B cell (primary cell): ENCODE measurements at regions of chr14 and their contacts with region 1.

Region 1: DNA sequence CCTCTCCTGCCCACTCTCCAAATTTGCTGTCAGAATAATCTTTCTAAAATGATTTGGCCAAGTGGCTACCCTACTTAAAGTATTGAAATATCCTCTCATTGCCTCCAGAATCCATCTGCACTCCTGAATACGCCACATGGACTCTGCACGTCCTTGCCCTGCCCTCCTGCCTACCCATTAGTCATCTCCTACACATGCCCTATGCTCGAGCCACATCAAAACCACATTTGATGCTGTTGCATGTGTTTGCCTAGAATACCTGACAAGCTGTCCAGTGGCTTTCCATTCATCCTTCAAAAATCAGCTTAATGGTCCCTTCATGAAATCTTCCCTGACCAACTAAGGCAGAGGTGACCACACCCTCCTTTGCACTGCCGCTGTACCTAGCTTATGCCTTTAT is 17.0 kb downstream of the VCPKMT start:
- DNase-seq: no peak
- ATAC-seq: no peak
- H3K4me3 ChIP-seq: no peak overlapping the region
- H3K4me3 Mint-ChIP-seq: no peak overlapping the region
- H3K27ac ChIP-seq: no peak overlapping the region
- H3K27ac Mint-ChIP-seq: peak overlapping the region; percentile 28
- H3K4me1 ChIP-seq: peaks cover 42 to 63% of the 10 kb centered on the region in 2 donors
- H3K4me1 Mint-ChIP-seq: peaks cover 66% of the 10 kb centered on the region
- H3K27me3 ChIP-seq: no peaks in the 10 kb centered on the region
- H3K27me3 Mint-ChIP-seq: no peaks in the 10 kb centered on the region
- CTCF ChIP-seq: no peak

Region 2: DNA sequence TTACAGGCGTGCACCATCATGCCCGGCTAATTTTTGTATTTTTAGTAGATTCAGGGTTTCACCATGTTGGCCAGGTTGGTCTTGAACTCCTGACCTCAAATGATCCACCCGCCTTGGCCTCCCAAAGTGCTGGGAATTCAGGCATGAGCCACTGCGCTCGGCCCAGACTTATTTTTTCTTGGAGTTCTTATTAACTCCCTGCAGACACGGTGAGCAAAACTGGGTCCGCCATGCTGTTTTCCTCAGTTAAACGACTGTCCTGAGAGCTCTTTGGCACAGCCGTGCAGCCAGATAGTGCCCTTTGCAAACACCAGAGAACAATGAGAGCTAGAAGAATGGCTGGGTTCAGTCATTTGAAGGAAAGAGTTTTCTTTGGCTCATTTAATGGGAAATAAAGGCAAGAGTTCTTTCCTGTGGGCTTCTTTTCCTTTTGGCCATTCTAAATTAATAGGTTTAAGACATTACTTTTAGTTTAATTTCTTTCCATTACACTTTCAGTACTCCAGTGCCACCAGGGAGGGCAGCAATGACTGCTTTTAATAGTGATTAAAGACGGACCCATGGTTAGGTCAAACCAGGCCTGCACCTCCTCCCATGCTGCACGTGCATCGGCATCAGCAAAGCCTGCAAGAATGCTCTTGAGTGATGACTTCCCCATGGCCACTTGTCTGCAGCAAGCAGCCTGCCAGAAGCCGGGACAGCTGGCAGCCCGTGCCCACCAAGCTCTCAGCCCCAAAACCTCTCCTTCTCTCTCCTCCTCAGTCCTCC is 43.7 kb before region 1 on chr14:
- CTCF ChIA-PET with region 1: interaction called, 29 read pairs
- POLR2A ChIA-PET with region 1: interaction called, 12 read pairs
- intact Hi-C with region 1: loop called (anchors 1 kb)
- DNase-seq: peak; percentile 64
- ATAC-seq: peak; percentile 93
- H3K4me3 ChIP-seq: no peak overlapping the region
- H3K4me3 Mint-ChIP-seq: peak overlapping the region; percentile 7
- H3K27ac ChIP-seq: no peak overlapping the region
- H3K27ac Mint-ChIP-seq: peak overlapping the region; percentile 77
- H3K4me1 ChIP-seq: peaks cover 15 to 35% of the 10 kb centered on the region in 2 donors
- H3K4me1 Mint-ChIP-seq: peaks cover 44% of the 10 kb centered on the region
- H3K27me3 ChIP-seq: no peaks in the 10 kb centered on the region
- H3K27me3 Mint-ChIP-seq: no peaks in the 10 kb centered on the region
- CTCF ChIP-seq: peak; percentile 52

Region 3: GRCh38 chr14:50139192-50139591 is 39.9 kb after region 1 on chr14:
- CTCF ChIA-PET with region 1: no interaction called
- POLR2A ChIA-PET with region 1: no interaction called
- intact Hi-C with region 1: no loop called
- DNase-seq: no peak
- ATAC-seq: no peak
- H3K4me3 ChIP-seq: no peak overlapping the region
- H3K4me3 Mint-ChIP-seq: no peak overlapping the region
- H3K27ac ChIP-seq: no peak overlapping the region
- H3K27ac Mint-ChIP-seq: no peak overlapping the region
- H3K4me1 ChIP-seq: no peaks in the 10 kb centered on the region
- H3K4me1 Mint-ChIP-seq: no peaks in the 10 kb centered on the region
- H3K27me3 ChIP-seq: no peaks in the 10 kb centered on the region
- H3K27me3 Mint-ChIP-seq: no peaks in the 10 kb centered on the region
- CTCF ChIP-seq: no peak